Activated CD4-positive, alpha-beta T cell treated with anti-CD3 and anti-CD28 coated beads, Interleukin-2, amount 10 ng/mL, durations not matched to agents 24 days and 14 days (primary cell): ENCODE measurements at regions of chr12 and their contacts with region 1.

Region 1: GRCh38 chr12:11981121-11981733 is 89.5 kb upstream of the BCL2L14 start:
- DNase-seq: peak; percentile 92
- H3K4me3 Mint-ChIP-seq: peak overlapping the region; percentile 68
- H3K27ac Mint-ChIP-seq: peak overlapping the region; percentile 99
- H3K4me1 Mint-ChIP-seq: peaks cover 62% of the 10 kb centered on the region
- H3K27me3 Mint-ChIP-seq: no peaks in the 10 kb centered on the region

Region 2: GRCh38 chr12:11765817-11766794 is 215.1 kb before region 1 on chr12:
- intact Hi-C with region 1: loop called (anchors 1 kb)
- DNase-seq: peak; percentile 74
- H3K4me3 Mint-ChIP-seq: peak overlapping the region; percentile 69
- H3K27ac Mint-ChIP-seq: peak overlapping the region; percentile 95
- H3K4me1 Mint-ChIP-seq: peaks cover 90% of the 10 kb centered on the region
- H3K27me3 Mint-ChIP-seq: no peaks in the 10 kb centered on the region

Region 3: GRCh38 chr12:11958221-11959091 is 22.8 kb before region 1 on chr12:
- intact Hi-C with region 1: loop called (anchors 1 kb)
- DNase-seq: peak; percentile 85
- H3K4me3 Mint-ChIP-seq: peak overlapping the region; percentile 27
- H3K27ac Mint-ChIP-seq: peak overlapping the region; percentile 91
- H3K4me1 Mint-ChIP-seq: peaks cover 57% of the 10 kb centered on the region
- H3K27me3 Mint-ChIP-seq: no peaks in the 10 kb centered on the region

Region 4: GRCh38 chr12:11969437-11970154 is 11.6 kb before region 1 on chr12:
- intact Hi-C with region 1: loop called (anchors 1 kb)
- DNase-seq: no peak
- H3K4me3 Mint-ChIP-seq: no peak overlapping the region
- H3K27ac Mint-ChIP-seq: no peak overlapping the region
- H3K4me1 Mint-ChIP-seq: peaks cover 21% of the 10 kb centered on the region
- H3K27me3 Mint-ChIP-seq: no peaks in the 10 kb centered on the region

Region 5: DNA sequence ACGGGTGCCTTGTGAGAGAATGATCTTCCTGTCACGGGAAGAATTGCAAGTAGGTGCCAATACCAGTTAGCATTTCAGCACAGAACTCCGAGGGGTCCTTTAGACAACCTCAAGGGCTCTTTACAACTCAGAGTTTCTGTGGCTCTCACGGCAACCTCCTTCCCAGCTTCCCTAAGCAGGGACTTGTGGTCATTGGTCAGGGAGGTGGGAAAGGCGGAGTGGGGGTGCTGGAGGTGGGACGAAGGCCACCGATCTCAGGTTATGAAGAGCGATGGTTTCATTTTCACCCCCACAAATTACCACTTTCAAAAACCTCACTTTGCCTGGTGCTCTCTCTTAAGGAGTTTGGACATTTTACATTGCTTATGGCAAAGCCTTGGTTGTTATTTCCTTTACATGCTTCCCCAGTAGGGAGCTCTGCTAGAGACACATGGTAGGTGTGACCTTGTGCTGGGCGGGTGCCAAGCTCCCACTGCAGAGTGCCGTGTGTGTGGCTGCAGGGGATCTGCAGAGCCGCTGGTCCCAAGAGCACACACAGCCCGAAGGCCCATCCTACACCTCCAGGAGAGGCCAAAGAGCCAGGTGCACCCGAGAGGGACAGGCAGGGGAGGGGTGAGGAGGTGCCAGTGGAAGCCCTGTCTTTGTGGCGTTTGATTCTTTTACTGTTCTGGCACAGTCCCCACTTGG is 110.9 kb after region 1 on chr12:
- intact Hi-C with region 1: no loop called
- DNase-seq: no peak
- H3K4me3 Mint-ChIP-seq: no peak overlapping the region
- H3K27ac Mint-ChIP-seq: no peak overlapping the region
- H3K4me1 Mint-ChIP-seq: peaks cover 2% of the 10 kb centered on the region
- H3K27me3 Mint-ChIP-seq: no peaks in the 10 kb centered on the region